ENCODE measurements at regions of chr17 and their contacts with region 1.

Region 1: GRCh38 chr17:1197781-1198490 is 18.2 kb upstream of the ABR start:
- DNase-seq: peak; percentile 92
- ATAC-seq: peak; percentile 87
- H3K4me3 ChIP-seq: peak overlapping the region in 1 of 5 experiments; percentile 29
- H3K4me3 Mint-ChIP-seq: peak overlapping the region; percentile 82
- H3K27ac ChIP-seq: peak overlapping the region; percentile 86 to 91
- H3K27ac Mint-ChIP-seq: peak overlapping the region; percentile 96
- H3K4me1 ChIP-seq: peaks cover 60 to 62% of the 10 kb centered on the region in 2 donors
- H3K4me1 Mint-ChIP-seq: peaks cover 60% of the 10 kb centered on the region
- H3K27me3 ChIP-seq: no peaks in the 10 kb centered on the region
- H3K27me3 Mint-ChIP-seq: no peaks in the 10 kb centered on the region
- CTCF ChIP-seq: no peak

Region 2: DNA sequence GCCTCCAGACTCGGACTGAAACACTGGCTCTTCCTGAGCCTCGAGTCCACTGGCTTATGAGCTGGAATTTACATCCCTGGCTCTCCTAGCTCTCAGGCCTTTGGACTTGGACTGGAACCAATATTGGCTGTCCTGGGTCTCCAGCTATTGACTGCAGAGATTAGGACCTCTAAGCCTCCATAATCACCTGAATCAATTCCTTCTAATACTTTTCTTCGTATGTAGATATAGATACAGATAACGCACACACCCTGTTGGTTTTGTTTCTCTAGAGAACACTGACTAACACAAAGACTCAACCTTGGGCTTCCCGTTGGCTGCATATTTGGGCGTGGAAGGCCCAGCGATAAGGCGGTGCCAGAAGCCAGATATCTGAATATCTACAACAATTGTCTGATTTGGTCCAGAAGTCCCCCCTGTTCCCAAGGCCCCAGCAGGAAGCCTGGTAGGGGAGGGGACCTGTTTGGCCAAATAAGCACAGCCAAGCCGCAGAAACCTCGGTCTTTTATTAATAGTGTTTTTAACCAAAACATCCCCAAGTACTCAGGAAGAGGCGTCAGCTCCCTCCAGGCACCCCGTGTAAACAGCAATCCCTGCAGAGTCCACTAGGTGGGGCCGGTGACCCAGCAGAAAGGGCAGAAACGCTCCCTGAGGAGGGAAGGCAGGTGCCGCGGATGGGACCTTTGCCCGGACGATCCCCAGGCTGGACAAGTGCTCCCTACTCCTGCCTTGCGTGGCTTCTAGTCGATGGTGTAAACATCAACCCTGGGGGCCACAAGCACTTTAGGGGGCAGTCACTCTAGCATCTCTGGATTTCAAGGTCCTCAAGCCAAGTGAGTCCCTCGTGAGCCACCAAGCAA is 75.2 kb before region 1 on chr17:
- CTCF ChIA-PET with region 1: interaction called, 19 read pairs
- POLR2A ChIA-PET with region 1: no interaction called
- intact Hi-C with region 1: no loop called
- DNase-seq: peak; percentile 85
- ATAC-seq: peak; percentile 95
- H3K4me3 ChIP-seq: no peak overlapping the region
- H3K4me3 Mint-ChIP-seq: no peak overlapping the region
- H3K27ac ChIP-seq: no peak overlapping the region
- H3K27ac Mint-ChIP-seq: no peak overlapping the region
- H3K4me1 ChIP-seq: peaks cover 12% of the 10 kb centered on the region in 2 donors
- H3K4me1 Mint-ChIP-seq: peaks cover 15% of the 10 kb centered on the region
- H3K27me3 ChIP-seq: no peaks in the 10 kb centered on the region
- H3K27me3 Mint-ChIP-seq: no peaks in the 10 kb centered on the region
- CTCF ChIP-seq: peak; percentile 92

Region 3: DNA sequence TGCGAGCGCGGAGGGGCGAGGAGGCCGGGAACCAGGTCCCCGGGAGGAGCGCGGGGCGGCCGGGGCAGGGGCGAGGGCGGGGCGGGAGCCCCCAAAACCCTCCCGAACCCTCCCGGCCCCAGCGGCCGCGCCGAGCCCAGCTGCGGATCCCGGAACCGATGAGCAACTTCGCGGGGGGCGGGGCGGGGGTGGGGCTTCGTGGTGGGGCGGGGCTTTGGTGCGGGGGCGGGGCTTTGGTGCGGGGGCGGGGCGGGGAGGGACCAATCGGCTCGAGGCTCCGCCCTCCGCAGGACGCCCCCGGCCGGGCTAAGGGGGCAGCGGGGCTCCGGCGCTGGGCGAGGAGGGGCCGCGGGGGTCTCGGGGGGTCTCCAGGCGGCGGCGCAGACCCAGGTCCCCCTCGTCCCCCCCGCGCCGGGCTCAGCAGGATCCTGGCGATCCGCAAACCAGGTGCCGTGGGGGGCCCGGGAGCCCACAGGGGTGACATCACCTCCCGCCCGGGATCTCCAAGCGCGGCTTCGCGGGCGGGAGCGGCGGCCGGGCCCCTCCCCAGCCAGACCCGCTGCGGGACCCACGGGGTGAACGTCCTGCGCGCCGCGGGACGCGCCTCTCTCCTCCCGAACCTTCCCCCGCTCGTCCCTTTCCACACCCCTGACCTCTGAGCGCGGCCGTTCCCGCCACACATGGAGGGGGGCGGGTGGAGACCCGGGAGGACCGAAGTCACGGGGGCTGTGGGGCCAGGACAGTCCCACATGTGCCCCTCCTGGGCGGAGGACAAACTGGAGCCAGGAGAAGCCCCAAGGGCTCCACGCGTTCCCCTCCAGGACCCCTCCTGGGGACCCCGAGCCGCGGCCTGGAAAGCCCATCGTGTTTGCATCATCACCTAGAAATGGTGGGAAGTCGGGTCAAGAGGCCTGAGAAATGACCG is 17.9 kb before region 1 on chr17 and contains the start of gene ABR:
- CTCF ChIA-PET with region 1: interaction called, 12 read pairs
- POLR2A ChIA-PET with region 1: interaction called, 20 read pairs
- intact Hi-C with region 1: loop called (anchors 1 kb)
- DNase-seq: peak; percentile 70
- ATAC-seq: peak; percentile 9
- H3K4me3 ChIP-seq: peak within 1 kb of the TSS in 4 of 5 experiments; percentile 47 to 71 (median 55)
- H3K4me3 Mint-ChIP-seq: peak within 1 kb of the TSS; percentile 87
- H3K27ac ChIP-seq: peak within 1 kb of the TSS in 1 of 2 donors; percentile 36
- H3K27ac Mint-ChIP-seq: peak within 1 kb of the TSS; percentile 53
- H3K4me1 ChIP-seq: peaks cover 59 to 69% of the 10 kb centered on the region in 2 donors
- H3K4me1 Mint-ChIP-seq: peaks cover 59% of the 10 kb centered on the region
- H3K27me3 ChIP-seq: peaks cover 0 to 24% (median 10%) of the 10 kb centered on the region in 4 experiments
- H3K27me3 Mint-ChIP-seq: no peaks in the 10 kb centered on the region
- CTCF ChIP-seq: no peak
- total RNA-seq, gene ABR: 262 and 304 TPM in 2 replicates

Region 4: GRCh38 chr17:1186923-1187771 is 10.8 kb before region 1 on chr17:
- CTCF ChIA-PET with region 1: interaction called, 80 read pairs
- POLR2A ChIA-PET with region 1: interaction called, 20 read pairs
- intact Hi-C with region 1: loop called (anchors 1 kb)
- DNase-seq: peak; percentile 82
- ATAC-seq: peak; percentile 72
- H3K4me3 ChIP-seq: no peak overlapping the region
- H3K4me3 Mint-ChIP-seq: peak overlapping the region; percentile 59
- H3K27ac ChIP-seq: no peak overlapping the region
- H3K27ac Mint-ChIP-seq: peak overlapping the region; percentile 21
- H3K4me1 ChIP-seq: peaks cover 42 to 49% of the 10 kb centered on the region in 2 donors
- H3K4me1 Mint-ChIP-seq: peaks cover 54% of the 10 kb centered on the region
- H3K27me3 ChIP-seq: peaks cover 0 to under 1% (median 0%) of the 10 kb centered on the region in 4 experiments
- H3K27me3 Mint-ChIP-seq: no peaks in the 10 kb centered on the region
- CTCF ChIP-seq: peak; percentile 97

Region 5: GRCh38 chr17:1216217-1217088 is 18.5 kb after region 1 on chr17:
- CTCF ChIA-PET with region 1: interaction called, 20 read pairs
- POLR2A ChIA-PET with region 1: interaction called, 14 read pairs
- intact Hi-C with region 1: loop called (anchors 2 kb)
- DNase-seq: peak; percentile 74
- ATAC-seq: peak; percentile 84
- H3K4me3 ChIP-seq: peak overlapping the region in 2 of 5 experiments; percentile 31 to 50
- H3K4me3 Mint-ChIP-seq: peak overlapping the region; percentile 69
- H3K27ac ChIP-seq: peak overlapping the region in 1 of 2 donors; percentile 49
- H3K27ac Mint-ChIP-seq: peak overlapping the region; percentile 67
- H3K4me1 ChIP-seq: peaks cover 52 to 60% of the 10 kb centered on the region in 2 donors
- H3K4me1 Mint-ChIP-seq: peaks cover 76% of the 10 kb centered on the region
- H3K27me3 ChIP-seq: no peaks in the 10 kb centered on the region
- H3K27me3 Mint-ChIP-seq: no peaks in the 10 kb centered on the region
- CTCF ChIP-seq: no peak